PC-9 (cell line): ENCODE measurements at regions of chr11 and their contacts with region 1.

Region 1: DNA sequence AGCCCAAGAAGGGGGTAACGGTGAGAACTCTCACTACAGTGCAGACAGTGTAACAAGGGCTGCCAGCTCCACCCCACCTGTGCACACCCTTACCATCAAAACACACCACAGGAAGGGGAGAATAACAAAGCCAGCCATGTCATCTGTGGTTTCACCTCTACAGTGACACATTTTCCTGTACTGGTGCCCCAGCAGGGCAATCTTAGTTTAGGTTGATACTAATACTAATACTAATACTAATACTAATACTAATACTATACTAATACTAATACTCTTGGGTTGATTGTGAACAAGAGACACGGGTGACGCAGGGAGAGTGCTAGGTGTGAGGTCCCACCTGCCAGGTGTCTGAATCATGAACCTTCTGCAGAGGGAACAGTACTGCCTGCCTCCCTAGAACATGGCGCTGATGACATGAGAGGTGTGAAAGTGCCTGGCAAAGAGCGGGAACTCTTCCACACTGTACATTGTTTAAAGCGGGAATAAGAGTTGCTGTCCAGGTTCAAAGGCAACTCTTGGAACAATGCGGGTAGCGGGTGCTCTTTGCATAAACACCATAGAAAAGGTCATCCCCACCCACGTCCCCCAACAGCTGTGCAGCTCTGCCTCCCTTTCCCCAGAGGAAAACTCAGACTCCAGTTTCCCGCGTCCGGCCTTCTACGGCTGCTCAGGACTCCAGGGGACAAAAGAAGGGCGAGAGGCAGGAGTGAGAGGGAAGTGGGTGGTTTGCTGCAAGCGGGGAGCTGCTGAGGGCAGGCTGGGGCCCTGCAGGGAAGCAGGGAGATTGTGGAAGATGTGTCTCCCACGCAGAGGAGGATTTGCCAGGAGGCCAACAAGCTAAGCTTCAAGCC is 25.0 kb upstream of the TMPRSS4 start:
- DNase-seq: no peak
- H3K4me3 ChIP-seq: no peak overlapping the region
- H3K27ac ChIP-seq: no peak overlapping the region
- H3K4me1 ChIP-seq: peaks cover 2% of the 10 kb centered on the region; the same call in 1 of the 2 replicates
- H3K27me3 ChIP-seq: peaks cover 16% of the 10 kb centered on the region
- CTCF ChIP-seq: no peak

Region 2: GRCh38 chr11:117743123-117743815 is 308.6 kb before region 1 on chr11:
- CTCF ChIA-PET with region 1: no interaction called
- POLR2A ChIA-PET with region 1: no interaction called
- intact Hi-C with region 1: no loop called
- DNase-seq: no peak
- H3K4me3 ChIP-seq: no peak overlapping the region
- H3K27ac ChIP-seq: no peak overlapping the region
- H3K4me1 ChIP-seq: no peaks in the 10 kb centered on the region
- H3K27me3 ChIP-seq: peaks cover 100% of the 10 kb centered on the region
- CTCF ChIP-seq: no peak

Region 3: DNA sequence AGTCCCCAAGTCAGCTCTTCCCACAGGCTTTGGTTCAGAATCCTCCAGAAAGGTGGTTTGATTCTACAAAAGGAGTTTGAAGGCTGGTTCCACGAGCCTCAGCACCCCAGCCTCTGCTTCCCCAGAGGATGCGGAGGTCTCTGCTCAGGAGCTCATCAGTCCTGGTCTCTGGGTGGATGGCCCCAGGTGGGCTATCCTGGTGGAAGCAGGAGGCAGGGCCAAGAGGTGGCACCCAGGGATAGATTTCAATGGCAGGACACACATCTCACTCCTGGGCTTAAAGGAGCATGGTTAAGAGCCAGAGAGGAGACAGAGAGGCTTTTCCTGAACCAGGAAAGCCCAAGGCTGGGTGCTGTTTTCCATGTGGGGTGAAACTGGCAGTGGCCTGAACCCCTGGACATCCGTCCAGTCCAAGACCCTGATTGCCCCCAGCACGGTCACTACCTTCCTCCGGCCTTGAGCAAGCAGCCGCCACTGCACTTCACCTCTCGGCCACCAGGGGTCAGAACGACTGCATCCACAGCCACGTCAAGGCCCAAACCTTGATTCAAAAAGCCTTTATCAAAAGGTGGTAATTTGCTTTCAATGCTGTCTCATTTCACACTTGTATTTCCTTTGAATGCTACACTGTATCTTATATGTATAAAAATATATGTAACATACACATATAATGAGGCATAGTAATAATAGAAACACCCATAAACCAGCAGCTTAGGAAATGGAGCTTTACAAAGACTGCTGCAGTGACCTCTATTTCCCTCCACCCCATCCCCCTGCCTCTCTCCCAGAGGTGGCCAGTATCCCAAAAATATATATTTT is 208.0 kb before region 1 on chr11:
- CTCF ChIA-PET with region 1: no interaction called
- POLR2A ChIA-PET with region 1: no interaction called
- intact Hi-C with region 1: loop called (anchors 1 kb)
- DNase-seq: peak in 1 of 2 experiments; percentile 68
- H3K4me3 ChIP-seq: no peak overlapping the region
- H3K27ac ChIP-seq: no peak overlapping the region
- H3K4me1 ChIP-seq: no peaks in the 10 kb centered on the region
- H3K27me3 ChIP-seq: peaks cover 6% of the 10 kb centered on the region
- CTCF ChIP-seq: peak; percentile 99